Posterior vena cava (tissue), 2 donors: ENCODE measurements at regions of chr5 and their contacts with region 1.

Region 1: GRCh38 chr5:60205071-60205470 is 311.5 kb upstream of the PDE4D start:
- DNase-seq: no peak

Region 2: DNA sequence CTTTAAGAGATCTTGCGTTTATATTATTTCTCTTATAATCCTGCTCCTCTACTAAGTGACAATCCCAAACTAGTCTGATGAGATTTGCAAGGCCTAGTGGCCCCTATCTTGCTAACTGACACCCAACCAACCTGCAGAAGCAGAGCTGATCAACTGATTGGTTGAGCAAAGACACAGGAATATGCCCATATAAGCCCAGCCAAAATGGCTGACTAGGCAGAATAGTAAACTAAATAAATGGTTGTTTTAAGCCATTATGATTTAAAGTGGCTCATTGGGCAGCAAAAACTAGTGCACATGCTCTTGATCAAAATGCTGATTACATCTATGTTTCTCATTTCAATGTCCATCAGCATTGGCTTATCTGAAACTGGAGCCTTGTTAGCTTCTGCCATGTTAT is 73.6 kb before region 1 on chr5:
- intact Hi-C with region 1: no loop called
- DNase-seq: no peak

Region 3: DNA sequence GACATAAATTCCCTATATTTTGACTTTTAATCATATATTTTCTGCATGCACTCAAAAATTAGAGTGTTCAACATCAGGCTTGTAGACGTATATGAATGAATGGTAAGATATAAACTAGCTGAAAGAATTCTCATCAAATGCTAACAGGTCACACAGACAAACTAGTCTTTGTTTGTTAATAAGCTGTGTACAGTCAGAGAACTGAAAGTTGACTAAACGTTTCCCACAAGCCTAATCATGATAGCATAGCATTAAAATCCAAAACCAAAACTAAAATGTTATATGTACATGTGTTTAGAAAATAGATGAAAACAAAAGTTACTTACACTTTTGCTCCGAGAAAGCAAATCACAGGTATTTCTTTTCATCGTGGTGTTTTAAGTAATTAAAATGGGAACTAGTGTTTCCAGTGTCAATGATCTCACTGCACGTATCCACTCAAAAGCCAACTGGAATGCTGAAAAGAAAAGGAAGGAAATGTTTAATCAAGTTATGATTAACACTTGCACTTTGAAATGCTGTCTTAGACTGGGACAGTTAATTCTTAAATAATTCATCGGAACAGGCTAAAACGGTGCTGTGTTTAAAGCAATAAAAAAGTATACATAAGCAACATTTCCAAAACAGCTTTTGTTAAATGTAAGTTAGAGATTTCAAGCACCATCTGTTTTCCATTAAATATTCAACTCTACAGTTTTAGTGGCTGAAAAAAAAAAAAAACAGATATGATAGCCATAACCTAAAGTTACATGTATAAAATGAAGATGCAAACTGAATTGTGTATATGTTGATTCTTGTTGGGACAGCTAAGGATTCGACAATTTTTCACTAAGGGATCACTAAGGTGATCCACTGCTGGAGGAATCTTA is 19.6 kb before region 1 on chr5:
- intact Hi-C with region 1: loop called in 1 of 2 experiments (anchors 1 kb)
- DNase-seq: no peak

Region 4: DNA sequence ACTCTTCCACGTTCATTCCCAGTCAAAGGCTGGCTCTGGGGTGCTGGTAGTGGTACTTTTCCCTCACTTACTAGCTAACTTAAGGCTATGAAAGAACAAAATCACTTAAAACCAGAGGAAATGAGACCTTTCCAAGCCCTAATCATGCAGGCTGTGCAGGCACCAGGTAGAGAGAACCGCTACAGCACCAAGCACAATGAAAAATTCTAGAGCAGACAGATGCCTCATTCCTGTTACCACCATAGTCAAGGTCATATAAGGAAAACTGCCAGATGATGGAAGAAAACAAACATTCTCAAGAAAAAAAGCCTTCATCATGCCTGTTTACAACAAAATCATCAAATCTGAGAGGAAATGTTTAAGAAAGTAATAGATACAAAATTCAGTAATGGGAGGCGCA is 62.8 kb after region 1 on chr5:
- intact Hi-C with region 1: loop called in 1 of 2 experiments (anchors 1 kb)
- DNase-seq: no peak